PC-3 (cell line): ENCODE measurements at regions of chr5 and their contacts with region 1.

Region 1: DNA sequence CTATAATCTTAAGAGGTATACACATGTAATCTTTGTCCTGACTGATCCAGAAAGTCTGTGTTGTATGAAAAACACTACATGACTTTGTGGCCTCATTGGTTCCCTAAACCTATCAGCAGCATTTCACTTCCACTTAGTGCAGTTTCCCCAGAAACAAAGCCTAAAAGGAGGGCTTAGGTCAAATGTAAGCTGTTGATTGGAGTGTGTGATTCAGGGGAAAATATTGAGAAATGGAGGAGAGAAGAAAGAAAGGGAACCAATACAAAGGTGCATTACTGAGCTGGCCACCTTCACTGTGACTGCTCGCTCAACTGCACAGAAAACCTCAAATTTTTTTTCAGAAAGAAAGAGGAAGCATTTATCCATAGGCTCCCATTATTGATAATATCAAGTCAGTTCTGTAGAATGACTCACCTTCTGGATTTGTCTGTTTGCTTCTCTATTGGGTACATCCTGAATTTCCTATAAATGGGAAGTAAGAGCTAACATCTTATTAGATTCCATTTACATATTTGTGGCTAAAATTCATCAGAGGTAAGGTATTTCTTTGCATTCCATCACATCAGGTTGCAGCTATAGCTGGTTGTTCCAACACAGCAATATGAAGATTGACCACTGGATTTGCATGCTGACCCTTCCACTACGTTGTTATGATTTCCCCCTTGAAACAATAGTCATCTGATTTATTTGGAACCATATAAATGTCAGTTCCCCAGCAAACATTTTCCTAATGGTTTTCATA is 10.3 kb upstream of the FST start:
- DNase-seq: peak; percentile 81
- ATAC-seq: peak; percentile 87
- H3K4me3 ChIP-seq: peak overlapping the region; percentile 35; the same call in 1 of the 2 replicates
- H3K27ac ChIP-seq: peak overlapping the region; percentile 86
- H3K4me1 ChIP-seq: peaks cover 47% of the 10 kb centered on the region
- H3K27me3 ChIP-seq: no peaks in the 10 kb centered on the region
- CTCF ChIP-seq: no peak

Region 2: DNA sequence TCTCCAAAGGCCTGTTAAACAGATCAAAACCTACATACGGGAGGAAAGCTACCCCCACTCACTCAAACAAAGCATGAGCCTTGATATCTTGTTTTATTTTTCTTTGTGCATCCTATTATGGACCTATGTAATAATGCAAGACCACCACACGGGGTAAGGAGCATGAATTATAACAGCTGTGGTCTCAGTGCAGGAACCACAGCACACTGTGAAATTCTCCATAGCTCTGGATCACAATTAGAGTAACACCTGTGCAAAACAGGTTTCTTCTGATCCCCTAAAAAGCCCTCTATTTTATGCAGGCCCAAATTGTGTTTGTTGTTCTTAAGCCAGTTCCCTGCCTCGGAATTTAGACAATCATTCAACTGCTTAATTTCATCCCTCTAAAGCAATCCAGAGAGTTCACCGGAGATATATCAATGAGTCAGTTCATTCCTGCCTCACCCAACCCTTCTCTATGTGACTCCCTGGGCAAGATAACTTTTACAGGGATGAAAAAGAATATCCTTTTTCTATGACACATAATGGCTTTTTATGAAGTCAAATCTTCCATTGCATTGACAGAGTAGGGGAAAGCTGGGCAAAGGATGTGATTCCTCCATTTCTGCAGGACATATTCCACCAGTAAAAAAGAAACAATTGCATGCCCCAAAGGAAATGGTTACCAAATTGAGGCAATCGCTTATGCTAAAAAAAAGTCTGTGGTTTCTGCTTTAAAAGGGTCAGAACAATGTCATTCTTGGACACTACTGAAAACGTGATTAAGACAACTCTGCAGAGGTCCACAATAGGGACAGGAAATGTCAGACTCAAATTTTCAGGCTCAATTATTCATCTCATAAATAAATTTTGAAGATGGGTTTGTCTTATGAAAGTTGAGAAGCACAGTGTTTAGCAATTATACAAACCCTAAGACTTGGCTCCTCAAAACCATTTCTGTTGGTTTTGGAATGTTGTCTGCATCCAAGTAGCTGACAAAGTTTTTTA is 31.3 kb before region 1 on chr5:
- CTCF ChIA-PET with region 1: no interaction called
- POLR2A ChIA-PET with region 1: no interaction called
- intact Hi-C with region 1: loop called (anchors 1 kb)
- DNase-seq: peak; percentile 79
- ATAC-seq: peak; percentile 96
- H3K4me3 ChIP-seq: no peak overlapping the region
- H3K27ac ChIP-seq: peak overlapping the region; percentile 87
- H3K4me1 ChIP-seq: peaks cover 29% of the 10 kb centered on the region
- H3K27me3 ChIP-seq: no peaks in the 10 kb centered on the region
- CTCF ChIP-seq: no peak